Caco-2 (cell line): ENCODE measurements at regions of chr20 and their contacts with region 1.

Region 1: GRCh38 chr20:39829661-39830060 is 859.4 kb downstream of the MAFB start:
- DNase-seq: no peak
- H3K4me3 ChIP-seq: no peak overlapping the region
- H3K4me3 Mint-ChIP-seq: no peak overlapping the region
- H3K27ac Mint-ChIP-seq: no peak overlapping the region
- H3K4me1 ChIP-seq: no peaks in the 10 kb centered on the region
- H3K4me1 Mint-ChIP-seq: no peaks in the 10 kb centered on the region
- H3K27me3 ChIP-seq: no peaks in the 10 kb centered on the region
- H3K27me3 Mint-ChIP-seq: peaks cover 4% of the 10 kb centered on the region
- CTCF ChIP-seq: no peak

Region 2: DNA sequence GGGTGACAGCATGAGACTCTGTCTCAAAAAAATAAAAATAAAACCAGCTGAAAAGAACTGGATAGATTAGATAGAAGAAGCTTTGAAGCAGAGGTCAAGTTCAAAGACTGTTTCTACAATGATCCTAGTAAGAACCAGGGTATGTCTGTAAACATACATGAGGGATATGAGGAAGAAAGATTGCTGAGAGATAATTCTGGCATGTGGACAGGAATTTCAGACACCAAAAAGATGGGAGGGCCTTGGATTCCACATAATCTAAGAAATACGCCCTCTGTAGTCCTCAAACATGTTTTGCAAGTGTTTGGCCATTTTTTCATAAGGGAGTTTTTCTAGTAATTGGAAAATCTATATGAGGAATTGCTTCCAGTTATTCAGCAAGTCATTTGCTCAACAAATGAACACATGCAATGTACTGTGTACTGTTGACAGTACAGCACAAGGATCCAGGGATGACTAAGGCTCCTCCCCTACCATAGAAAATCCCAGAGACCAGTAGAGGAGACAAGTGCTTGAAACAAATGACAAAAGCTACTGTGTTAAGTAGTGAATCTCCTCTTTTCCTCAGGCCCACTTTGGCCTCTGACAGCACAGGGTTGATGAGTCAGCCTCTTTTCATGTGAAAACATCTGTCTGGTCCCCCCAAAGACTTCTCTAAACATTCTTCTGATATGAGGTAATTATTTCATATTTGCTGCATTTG is 63.5 kb after region 1 on chr20:
- CTCF ChIA-PET with region 1: no interaction called
- POLR2A ChIA-PET with region 1: no interaction called
- intact Hi-C with region 1: loop called (anchors 10 kb)
- DNase-seq: no peak
- H3K4me3 ChIP-seq: no peak overlapping the region
- H3K4me3 Mint-ChIP-seq: no peak overlapping the region
- H3K27ac Mint-ChIP-seq: no peak overlapping the region
- H3K4me1 ChIP-seq: no peaks in the 10 kb centered on the region
- H3K4me1 Mint-ChIP-seq: no peaks in the 10 kb centered on the region
- H3K27me3 ChIP-seq: no peaks in the 10 kb centered on the region
- H3K27me3 Mint-ChIP-seq: peaks cover 8% of the 10 kb centered on the region
- CTCF ChIP-seq: peak in 1 of 2 experiments; percentile 12

Region 3: DNA sequence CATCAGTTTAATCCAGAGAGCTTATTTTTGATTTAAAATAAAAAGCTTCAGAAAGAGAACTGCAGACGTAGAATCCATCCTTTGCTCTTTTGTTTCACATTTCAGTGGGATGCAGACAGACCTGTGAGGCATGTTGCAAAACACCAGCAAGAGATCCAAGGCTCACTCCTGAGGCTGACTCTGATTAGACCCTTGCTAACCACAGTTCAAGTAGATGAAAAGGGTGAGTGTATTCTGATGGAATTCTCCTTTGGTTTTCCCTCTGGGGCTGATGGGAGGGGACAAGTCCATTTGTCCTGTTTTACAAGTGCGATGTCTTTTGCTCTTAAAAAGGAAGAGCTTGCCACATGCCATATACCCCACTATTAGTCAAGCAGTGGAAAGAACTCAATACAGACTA is 86.6 kb after region 1 on chr20:
- CTCF ChIA-PET with region 1: no interaction called
- POLR2A ChIA-PET with region 1: no interaction called
- intact Hi-C with region 1: no loop called
- DNase-seq: no peak
- H3K4me3 ChIP-seq: no peak overlapping the region
- H3K4me3 Mint-ChIP-seq: no peak overlapping the region
- H3K27ac Mint-ChIP-seq: no peak overlapping the region
- H3K4me1 ChIP-seq: no peaks in the 10 kb centered on the region
- H3K4me1 Mint-ChIP-seq: no peaks in the 10 kb centered on the region
- H3K27me3 ChIP-seq: no peaks in the 10 kb centered on the region
- H3K27me3 Mint-ChIP-seq: peaks cover 4% of the 10 kb centered on the region
- CTCF ChIP-seq: no peak